MCF 10A (cell line): ENCODE measurements at regions of chr6 and their contacts with region 1.

Region 1: DNA sequence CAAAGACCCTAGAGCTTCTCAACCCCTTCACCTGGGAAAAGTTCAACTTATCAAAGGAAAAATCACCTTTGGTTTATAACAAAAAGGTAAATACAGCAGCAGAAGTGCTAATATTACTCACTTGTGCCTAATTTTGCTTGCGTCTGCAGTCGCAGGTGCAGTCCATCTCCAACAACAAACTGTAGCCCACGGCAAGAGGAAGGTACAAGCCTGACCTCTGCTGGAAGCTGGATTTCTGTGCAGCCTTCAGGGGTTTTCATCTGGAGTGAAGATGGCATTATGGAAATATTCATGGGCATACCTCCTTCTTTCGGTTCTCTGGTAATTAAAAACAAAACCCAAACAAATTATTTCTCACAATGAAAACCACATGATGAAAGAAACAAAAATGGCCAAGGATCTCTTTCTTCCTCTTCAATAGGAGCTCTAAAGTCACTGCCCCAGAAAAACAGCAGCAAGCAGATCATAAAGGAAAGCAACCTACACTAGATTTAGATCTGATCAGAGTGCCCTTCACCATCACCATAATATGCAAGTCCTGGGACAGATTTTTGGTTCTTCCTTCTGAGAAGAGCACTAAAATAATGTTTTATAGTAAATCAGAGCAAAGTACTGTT is 7.8 kb downstream of the UBE3D start:
- DNase-seq: peak; percentile 68
- H3K4me3 Mint-ChIP-seq: no peak overlapping the region
- H3K27ac Mint-ChIP-seq: no peak overlapping the region
- H3K4me1 Mint-ChIP-seq: peaks cover 5% of the 10 kb centered on the region
- H3K27me3 Mint-ChIP-seq: no peaks in the 10 kb centered on the region
- CTCF ChIP-seq: peak; percentile 73

Region 2: GRCh38 chr6:82331031-82331773 is 726.6 kb before region 1 on chr6:
- CTCF ChIA-PET with region 1: interaction called, 12 read pairs
- POLR2A ChIA-PET with region 1: no interaction called
- intact Hi-C with region 1: loop called (anchors 1 kb)
- DNase-seq: peak; percentile 94
- H3K4me3 Mint-ChIP-seq: peak overlapping the region; percentile 68
- H3K27ac Mint-ChIP-seq: peak overlapping the region; percentile 91
- H3K4me1 Mint-ChIP-seq: peaks cover 34% of the 10 kb centered on the region
- H3K27me3 Mint-ChIP-seq: no peaks in the 10 kb centered on the region
- CTCF ChIP-seq: peak; percentile 38

Region 3: GRCh38 chr6:82541306-82541705 is 516.5 kb before region 1 on chr6:
- CTCF ChIA-PET with region 1: interaction called, 5 read pairs
- POLR2A ChIA-PET with region 1: no interaction called
- intact Hi-C with region 1: loop called (anchors 5 kb)
- DNase-seq: no peak
- H3K4me3 Mint-ChIP-seq: no peak overlapping the region
- H3K27ac Mint-ChIP-seq: no peak overlapping the region
- H3K4me1 Mint-ChIP-seq: no peaks in the 10 kb centered on the region
- H3K27me3 Mint-ChIP-seq: no peaks in the 10 kb centered on the region
- CTCF ChIP-seq: no peak

Region 4: DNA sequence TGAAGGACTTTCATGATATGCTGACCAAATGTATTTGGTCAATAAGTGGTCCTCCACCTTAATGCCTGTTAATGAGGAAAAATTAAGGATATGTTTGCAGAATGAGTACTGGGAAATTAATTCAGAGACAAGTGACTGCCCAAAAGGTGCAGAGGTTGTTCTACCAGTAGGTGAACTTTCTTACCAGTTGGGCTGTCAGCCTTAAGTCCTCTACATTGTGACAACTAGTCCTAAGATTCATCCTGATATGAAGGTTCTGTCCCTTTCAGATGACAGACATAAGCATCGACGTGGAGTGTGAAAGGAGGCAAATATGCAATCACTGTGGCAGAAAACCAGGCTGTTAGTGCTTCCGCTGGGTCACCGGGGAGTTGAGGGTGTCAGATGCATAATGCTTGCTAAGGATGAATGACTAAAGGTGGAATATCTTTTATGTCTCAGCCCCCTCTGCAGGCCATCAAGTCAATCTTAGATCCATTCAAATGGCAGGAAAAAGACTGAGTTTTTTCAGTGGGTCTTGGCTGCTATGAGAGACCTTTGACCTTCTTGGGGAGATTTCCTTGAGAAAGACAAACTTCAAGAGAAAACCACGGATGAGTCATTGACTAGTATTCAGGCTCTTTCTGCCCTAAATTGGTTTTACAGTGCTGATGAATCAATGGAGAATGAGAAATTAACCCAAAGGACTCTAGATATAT is 468.2 kb before region 1 on chr6:
- CTCF ChIA-PET with region 1: interaction called, 3 read pairs
- POLR2A ChIA-PET with region 1: no interaction called
- intact Hi-C with region 1: loop called (anchors 1 kb)
- DNase-seq: peak; percentile 72
- H3K4me3 Mint-ChIP-seq: no peak overlapping the region
- H3K27ac Mint-ChIP-seq: no peak overlapping the region
- H3K4me1 Mint-ChIP-seq: no peaks in the 10 kb centered on the region
- H3K27me3 Mint-ChIP-seq: no peaks in the 10 kb centered on the region
- CTCF ChIP-seq: peak; percentile 30

Region 5: GRCh38 chr6:82616386-82617028 is 441.3 kb before region 1 on chr6:
- CTCF ChIA-PET with region 1: interaction called, 6 read pairs
- POLR2A ChIA-PET with region 1: no interaction called
- intact Hi-C with region 1: loop called (anchors 1 kb)
- DNase-seq: peak; percentile 6
- H3K4me3 Mint-ChIP-seq: no peak overlapping the region
- H3K27ac Mint-ChIP-seq: no peak overlapping the region
- H3K4me1 Mint-ChIP-seq: no peaks in the 10 kb centered on the region
- H3K27me3 Mint-ChIP-seq: no peaks in the 10 kb centered on the region
- CTCF ChIP-seq: no peak

Region 6: DNA sequence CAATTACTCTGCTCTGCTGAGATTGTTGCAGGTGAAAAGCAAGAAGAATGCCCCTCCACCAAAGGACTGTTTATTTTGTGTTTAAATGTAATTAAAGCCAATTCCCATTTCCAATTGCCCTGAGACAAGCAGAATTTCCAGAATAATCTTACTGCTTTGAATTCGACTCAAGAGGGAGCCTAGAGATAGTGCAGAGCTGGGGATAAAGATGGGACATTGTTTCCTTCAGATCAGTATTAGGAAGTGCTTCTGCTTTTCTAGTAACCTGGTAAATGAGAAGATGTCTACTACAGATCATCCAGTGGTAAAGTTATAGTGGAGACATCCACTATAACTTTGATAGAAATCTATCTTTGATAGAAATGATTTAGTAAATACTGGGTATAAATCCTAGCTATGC is 319.0 kb before region 1 on chr6:
- CTCF ChIA-PET with region 1: interaction called, 4 read pairs
- POLR2A ChIA-PET with region 1: no interaction called
- intact Hi-C with region 1: loop called (anchors 2 kb)
- DNase-seq: no peak
- H3K4me3 Mint-ChIP-seq: no peak overlapping the region
- H3K27ac Mint-ChIP-seq: no peak overlapping the region
- H3K4me1 Mint-ChIP-seq: no peaks in the 10 kb centered on the region
- H3K27me3 Mint-ChIP-seq: peaks cover 18% of the 10 kb centered on the region
- CTCF ChIP-seq: no peak